ENCODE measurements at regions of chr10 and their contacts with region 1.

Region 1: DNA sequence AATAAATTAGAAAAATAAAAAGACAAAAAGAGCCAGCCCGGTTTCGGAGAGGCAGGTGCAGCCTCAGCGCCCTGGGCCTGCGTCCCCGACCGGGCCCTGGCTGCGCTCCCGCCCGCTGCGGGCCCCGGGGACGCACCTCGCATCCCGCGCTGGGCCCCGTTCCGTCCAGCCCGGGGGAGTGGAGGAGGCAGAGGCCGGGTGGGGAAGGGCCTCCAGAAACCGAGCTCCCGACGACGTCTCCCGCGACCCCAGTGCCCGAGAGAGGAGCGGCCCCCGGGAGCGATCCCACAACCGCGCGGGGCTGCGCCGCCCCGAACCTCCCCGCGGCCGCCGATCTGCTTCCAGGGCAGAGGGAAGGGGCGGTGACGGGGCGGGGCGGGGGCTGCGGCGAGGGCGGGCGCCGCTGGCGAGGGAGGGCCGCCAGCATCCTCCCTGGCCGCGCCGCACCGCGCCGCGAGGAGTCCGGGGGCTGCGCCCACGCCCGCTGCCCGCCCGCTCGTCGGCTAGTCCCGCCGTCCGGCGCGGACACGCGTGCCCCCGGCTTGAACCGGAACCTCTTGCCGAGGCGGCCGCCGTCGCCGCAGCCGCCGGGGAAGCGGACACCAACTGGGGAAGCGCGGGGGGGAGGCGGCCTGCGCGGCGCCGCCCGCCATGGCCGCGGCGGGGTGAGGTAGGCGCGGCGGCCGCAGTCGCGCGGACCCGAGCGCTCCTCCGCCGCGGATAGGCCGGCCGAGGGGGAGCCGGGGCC is at the start of gene CCNY:
- DNase-seq: peak; percentile 73 to 89
- ATAC-seq: peak; percentile 90
- total RNA-seq, gene CCNY: 51.6 to 78.0 TPM

Region 2: DNA sequence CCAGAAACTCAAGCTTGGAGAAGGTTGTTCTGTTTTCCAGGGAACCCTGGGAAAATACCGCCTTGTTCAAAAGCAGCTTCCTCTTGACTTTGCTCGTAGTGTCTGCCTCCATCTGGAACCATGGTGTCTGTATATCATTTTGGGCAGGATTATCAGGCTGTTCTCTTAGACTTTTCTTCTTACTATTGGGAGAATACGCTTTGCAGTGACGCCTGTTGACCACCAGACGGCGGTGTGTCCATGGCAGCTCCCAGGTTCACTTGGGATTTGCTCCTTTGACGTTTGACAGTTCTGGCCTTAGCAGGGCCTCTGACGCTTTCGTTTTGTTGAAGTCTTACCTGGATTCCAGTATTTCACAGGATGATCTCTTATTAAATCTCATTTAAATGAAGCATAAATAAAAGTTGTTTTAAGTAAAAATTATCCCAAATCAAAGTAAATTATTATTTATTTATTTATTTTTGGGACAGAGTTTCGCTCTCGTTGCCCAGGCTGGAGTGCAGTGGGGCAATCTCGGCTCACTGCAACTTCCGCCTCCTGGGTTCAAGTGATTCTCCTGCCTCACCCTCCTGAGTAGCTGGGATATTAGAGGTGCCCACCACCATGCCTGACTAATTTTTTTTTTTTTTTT is 227.1 kb after region 1 on chr10:
- intact Hi-C with region 1: loop called in 1 of 2 experiments (anchors 10 kb)
- DNase-seq: peak in 1 of 2 donors; percentile 37
- ATAC-seq: peak; percentile 79

Measured in left colon (tissue), 2 donors.